Activated B cell treated with CpG ODN at 0.5 μM for 24 hours (primary cell): ENCODE measurements at regions of chr7 and their contacts with region 1.

Region 1: DNA sequence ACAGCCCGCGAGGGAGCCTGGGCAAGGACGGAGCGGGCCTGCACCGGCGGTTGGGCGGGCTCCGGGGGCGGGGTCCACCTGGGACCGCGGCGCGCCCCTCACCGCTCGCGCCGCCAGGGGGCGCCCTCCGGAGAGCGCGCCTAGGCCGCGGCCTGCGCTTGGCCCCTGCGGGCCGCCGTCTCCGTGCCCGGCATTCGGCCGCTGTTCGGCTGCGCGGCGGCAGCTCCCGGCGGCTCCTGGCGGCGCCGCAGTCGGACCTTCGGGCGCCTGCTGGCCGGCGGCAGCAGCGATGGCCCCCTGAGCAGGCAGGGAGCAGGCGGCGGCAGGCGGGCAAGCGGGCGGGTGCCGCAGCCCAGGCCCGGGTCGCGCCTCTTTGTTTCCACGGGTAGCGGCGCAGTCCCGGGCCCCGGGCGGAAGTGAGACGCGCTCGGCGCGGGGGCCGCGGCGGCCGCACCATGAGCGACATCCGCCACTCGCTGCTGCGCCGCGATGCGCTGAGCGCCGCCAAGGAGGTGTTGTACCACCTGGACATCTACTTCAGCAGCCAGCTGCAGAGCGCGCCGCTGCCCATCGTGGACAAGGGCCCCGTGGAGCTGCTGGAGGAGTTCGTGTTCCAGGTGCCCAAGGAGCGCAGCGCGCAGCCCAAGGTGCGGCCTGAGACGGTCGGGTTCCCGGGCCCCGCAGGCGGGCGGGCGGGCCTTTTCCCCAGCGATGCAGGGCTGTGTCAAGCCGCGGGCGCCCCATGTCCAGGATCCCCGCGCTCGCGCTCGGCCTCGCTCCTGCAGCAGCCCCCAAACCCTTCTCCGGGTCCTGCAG is at the start of gene INTS15:
- DNase-seq: peak; percentile 93
- ATAC-seq: peak; percentile 90
- H3K4me3 Mint-ChIP-seq: peak within 1 kb of the TSS; percentile 89
- H3K27ac Mint-ChIP-seq: peak within 1 kb of the TSS; percentile 80
- H3K4me1 Mint-ChIP-seq: peaks cover 21% of the 10 kb centered on the region
- H3K27me3 Mint-ChIP-seq: no peaks in the 10 kb centered on the region
- CTCF ChIP-seq: no peak
- total RNA-seq, gene INTS15: 49.0 and 49.9 TPM in 2 replicates

Region 2: DNA sequence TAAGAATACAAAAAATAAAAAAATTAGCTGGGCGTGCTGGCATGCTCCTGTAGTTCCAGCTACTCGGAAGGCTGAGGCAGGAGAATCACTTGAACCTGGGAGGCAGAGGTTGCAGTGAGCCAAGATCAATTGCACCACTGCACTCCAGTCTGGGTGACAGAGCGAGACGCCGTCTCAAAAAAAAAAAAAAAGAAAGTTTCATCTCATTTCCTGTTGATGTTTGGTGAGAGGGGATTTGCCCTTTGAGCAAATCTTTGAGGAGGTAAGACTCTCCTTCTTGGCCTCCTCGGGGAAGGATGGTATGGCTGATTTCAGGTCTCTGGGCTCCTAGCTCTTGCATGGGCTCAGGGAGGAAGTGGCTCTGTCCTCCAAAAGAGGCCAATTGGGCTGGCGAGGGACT is 35.2 kb before region 1 on chr7:
- CTCF ChIA-PET with region 1: no interaction called
- POLR2A ChIA-PET with region 1: interaction called, 12 read pairs
- intact Hi-C with region 1: no loop called
- DNase-seq: no peak
- ATAC-seq: no peak
- H3K4me3 Mint-ChIP-seq: peak overlapping the region; percentile 15
- H3K27ac Mint-ChIP-seq: no peak overlapping the region
- H3K4me1 Mint-ChIP-seq: peaks cover 7% of the 10 kb centered on the region
- H3K27me3 Mint-ChIP-seq: no peaks in the 10 kb centered on the region
- CTCF ChIP-seq: no peak

Region 3: GRCh38 chr7:6577365-6578113 is 12.5 kb before region 1 on chr7 and contains the start of gene ZDHHC4:
- CTCF ChIA-PET with region 1: interaction called, 4 read pairs
- POLR2A ChIA-PET with region 1: interaction called, 16 read pairs
- intact Hi-C with region 1: loop called (anchors 1 kb)
- DNase-seq: peak; percentile 86
- ATAC-seq: peak; percentile 88
- H3K4me3 Mint-ChIP-seq: peak within 1 kb of the TSS; percentile 88
- H3K27ac Mint-ChIP-seq: peak within 1 kb of the TSS; percentile 89
- H3K4me1 Mint-ChIP-seq: peaks cover 26% of the 10 kb centered on the region
- H3K27me3 Mint-ChIP-seq: no peaks in the 10 kb centered on the region
- CTCF ChIP-seq: no peak
- total RNA-seq, gene ZDHHC4: 33.2 and 37.4 TPM in 2 replicates

Region 4: GRCh38 chr7:6615723-6616555 is 25.9 kb after region 1 on chr7:
- CTCF ChIA-PET with region 1: no interaction called
- POLR2A ChIA-PET with region 1: interaction called, 10 read pairs
- intact Hi-C with region 1: no loop called
- DNase-seq: no peak
- ATAC-seq: peak; percentile 23
- H3K4me3 Mint-ChIP-seq: peak overlapping the region; percentile 64
- H3K27ac Mint-ChIP-seq: no peak overlapping the region
- H3K4me1 Mint-ChIP-seq: peaks cover 22% of the 10 kb centered on the region
- H3K27me3 Mint-ChIP-seq: peaks cover 3% of the 10 kb centered on the region
- CTCF ChIP-seq: no peak

Region 5: GRCh38 chr7:6675807-6676405 is 85.9 kb after region 1 on chr7:
- CTCF ChIA-PET with region 1: no interaction called
- POLR2A ChIA-PET with region 1: no interaction called
- intact Hi-C with region 1: no loop called
- DNase-seq: no peak
- ATAC-seq: no peak
- H3K4me3 Mint-ChIP-seq: no peak overlapping the region
- H3K27ac Mint-ChIP-seq: no peak overlapping the region
- H3K4me1 Mint-ChIP-seq: no peaks in the 10 kb centered on the region
- H3K27me3 Mint-ChIP-seq: no peaks in the 10 kb centered on the region
- CTCF ChIP-seq: no peak

Region 6: DNA sequence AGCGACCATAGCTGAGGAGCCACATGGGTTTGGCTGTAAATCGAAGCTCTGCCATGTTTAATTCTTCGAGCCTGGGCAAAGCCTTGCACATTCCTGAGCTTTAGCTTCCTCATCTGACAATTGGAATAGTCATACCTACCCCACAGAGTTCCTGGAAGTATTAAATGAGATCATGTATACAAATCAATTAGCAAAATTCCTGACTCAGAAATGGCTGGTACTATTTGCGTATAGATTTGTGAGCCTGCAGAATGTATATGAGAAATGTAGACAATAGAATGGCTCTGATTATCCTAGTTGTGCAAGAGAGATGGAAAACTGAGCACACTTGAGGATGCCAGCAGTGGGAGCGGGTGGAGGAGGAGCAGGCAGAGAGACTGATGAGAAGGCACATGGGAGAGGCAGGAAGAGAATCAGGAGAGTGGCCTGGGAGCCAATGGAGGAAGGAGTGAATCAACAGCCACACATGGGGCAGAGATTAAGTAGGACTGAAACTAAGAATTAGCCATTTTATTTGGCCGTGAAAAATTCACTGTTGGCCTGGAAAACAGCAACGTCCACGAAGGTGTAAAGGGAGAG is 464.3 kb after region 1 on chr7:
- CTCF ChIA-PET with region 1: no interaction called
- POLR2A ChIA-PET with region 1: no interaction called
- intact Hi-C with region 1: no loop called
- DNase-seq: no peak
- ATAC-seq: no peak
- H3K4me3 Mint-ChIP-seq: no peak overlapping the region
- H3K27ac Mint-ChIP-seq: no peak overlapping the region
- H3K4me1 Mint-ChIP-seq: peaks cover 8% of the 10 kb centered on the region
- H3K27me3 Mint-ChIP-seq: peaks cover 2% of the 10 kb centered on the region
- CTCF ChIP-seq: no peak

Region 7: GRCh38 chr7:8217200-8218068 is 1627.4 kb after region 1 on chr7:
- CTCF ChIA-PET with region 1: no interaction called
- POLR2A ChIA-PET with region 1: no interaction called
- intact Hi-C with region 1: loop called (anchors 10 kb)
- DNase-seq: no peak
- ATAC-seq: no peak
- H3K4me3 Mint-ChIP-seq: no peak overlapping the region
- H3K27ac Mint-ChIP-seq: no peak overlapping the region
- H3K4me1 Mint-ChIP-seq: no peaks in the 10 kb centered on the region
- H3K27me3 Mint-ChIP-seq: no peaks in the 10 kb centered on the region
- CTCF ChIP-seq: no peak